ENCODE measurements at regions of chr15 and their contacts with region 1.

Region 1: DNA sequence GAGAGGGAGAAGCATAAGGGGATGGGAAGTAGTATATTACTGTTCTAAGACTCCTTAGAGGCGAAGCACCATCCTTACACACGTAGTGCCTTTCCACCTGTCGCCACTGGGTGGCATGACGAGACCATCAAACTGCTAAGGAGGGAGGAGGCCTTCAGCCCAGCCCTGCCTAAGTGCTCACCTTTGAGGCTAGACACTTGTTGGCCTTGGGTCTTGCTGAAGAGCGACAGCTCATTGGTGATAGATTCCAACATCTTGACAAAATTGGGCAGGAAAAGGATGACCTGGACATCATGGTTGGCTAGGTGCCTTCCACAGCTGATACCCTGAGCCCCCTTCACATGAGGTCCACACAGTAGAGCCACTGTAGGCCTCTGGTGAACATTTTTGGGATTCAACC is 19.6 kb downstream of the CLK3 start:
- DNase-seq: peak; percentile 47 to 85 (median 66)
- ATAC-seq: peak; percentile 75 to 86 (median 84)
- H3K4me3 ChIP-seq: no peak overlapping the region
- H3K4me3 Mint-ChIP-seq: no peak overlapping the region
- H3K27ac ChIP-seq: no peak overlapping the region
- H3K27ac Mint-ChIP-seq: no peak overlapping the region
- H3K4me1 ChIP-seq: peaks cover 0 to 5% of the 10 kb centered on the region in 2 experiments
- H3K4me1 Mint-ChIP-seq: peaks cover 4 to 7% (median 6%) of the 10 kb centered on the region in 3 donors
- H3K27me3 ChIP-seq: no peaks in the 10 kb centered on the region
- H3K27me3 Mint-ChIP-seq: no peaks in the 10 kb centered on the region

Region 2: GRCh38 chr15:74453925-74454763 is 181.1 kb before region 1 on chr15:
- CTCF ChIA-PET with region 1: no interaction called
- POLR2A ChIA-PET with region 1: interaction called in 1 of 2 experiments, 10 read pairs
- DNase-seq: no peak
- ATAC-seq: peak; percentile 40 to 62 (median 53)
- H3K4me3 ChIP-seq: no peak overlapping the region
- H3K4me3 Mint-ChIP-seq: peak overlapping the region in 1 of 3 donors; percentile 11
- H3K27ac ChIP-seq: no peak overlapping the region
- H3K27ac Mint-ChIP-seq: peak overlapping the region; percentile 5 to 73
- H3K4me1 ChIP-seq: peaks cover 2 to 8% of the 10 kb centered on the region in 2 experiments
- H3K4me1 Mint-ChIP-seq: peaks cover 28 to 29% (median 29%) of the 10 kb centered on the region in 3 donors
- H3K27me3 ChIP-seq: no peaks in the 10 kb centered on the region
- H3K27me3 Mint-ChIP-seq: no peaks in the 10 kb centered on the region

Region 3: GRCh38 chr15:74598126-74598842 is 36.9 kb before region 1 on chr15:
- CTCF ChIA-PET with region 1: no interaction called
- POLR2A ChIA-PET with region 1: no interaction called
- DNase-seq: peak; percentile 64 to 88 (median 81)
- ATAC-seq: peak; percentile 94 to 98 (median 96)
- H3K4me3 ChIP-seq: peak overlapping the region; percentile 85 to 86
- H3K4me3 Mint-ChIP-seq: peak overlapping the region; percentile 94 to 99 (median 99)
- H3K27ac ChIP-seq: peak overlapping the region; percentile 75
- H3K27ac Mint-ChIP-seq: peak overlapping the region; percentile 99
- H3K4me1 ChIP-seq: peaks cover 2 to 24% of the 10 kb centered on the region in 2 experiments
- H3K4me1 Mint-ChIP-seq: peaks cover 19 to 20% (median 20%) of the 10 kb centered on the region in 3 donors
- H3K27me3 ChIP-seq: no peaks in the 10 kb centered on the region
- H3K27me3 Mint-ChIP-seq: no peaks in the 10 kb centered on the region

Region 4: GRCh38 chr15:74620636-74621545 is 14.3 kb before region 1 on chr15:
- CTCF ChIA-PET with region 1: interaction called, 7 to 16 read pairs
- POLR2A ChIA-PET with region 1: interaction called, 3 read pairs
- DNase-seq: peak; percentile 40 to 86 (median 69)
- ATAC-seq: peak; percentile 84 to 87 (median 86)
- H3K4me3 ChIP-seq: no peak overlapping the region
- H3K4me3 Mint-ChIP-seq: peak overlapping the region in 2 of 3 donors; percentile 12 to 24
- H3K27ac ChIP-seq: no peak overlapping the region
- H3K27ac Mint-ChIP-seq: peak overlapping the region; percentile 80 to 82
- H3K4me1 ChIP-seq: peaks cover 12 to 75% of the 10 kb centered on the region in 2 experiments
- H3K4me1 Mint-ChIP-seq: peaks cover 47 to 61% (median 58%) of the 10 kb centered on the region in 3 donors
- H3K27me3 ChIP-seq: no peaks in the 10 kb centered on the region
- H3K27me3 Mint-ChIP-seq: no peaks in the 10 kb centered on the region

Measured in T-cell (primary cell).